ENCODE measurements at regions of chr11 and their contacts with region 1.

Region 1: DNA sequence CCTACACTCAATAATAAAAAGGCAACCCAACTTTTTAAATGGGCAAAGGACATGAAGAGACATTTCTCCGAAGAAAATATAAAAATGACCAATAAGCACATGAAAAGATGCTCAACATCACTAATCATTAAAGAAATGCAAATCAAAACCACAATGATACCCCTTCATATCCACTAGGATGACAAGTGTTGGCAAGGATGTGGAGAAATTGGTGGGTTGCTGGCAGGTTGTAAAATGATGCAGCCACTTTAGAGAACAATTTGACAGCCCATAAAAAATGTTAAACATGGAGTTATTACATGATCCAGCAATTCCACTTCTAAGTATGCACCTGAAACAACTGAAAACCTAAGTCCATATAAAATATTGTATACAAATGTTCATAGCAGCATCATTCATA is 73.2 kb upstream of the LMO2 start:
- DNase-seq: no peak
- ATAC-seq: no peak
- H3K4me3 ChIP-seq: no peak overlapping the region
- H3K27ac ChIP-seq: no peak overlapping the region
- H3K4me1 ChIP-seq: no peaks in the 10 kb centered on the region
- H3K27me3 ChIP-seq: no peaks in the 10 kb centered on the region
- CTCF ChIP-seq: no peak
- POLR2A ChIP-seq: no peak

Region 2: GRCh38 chr11:33819278-33819677 is 145.8 kb before region 1 on chr11:
- in situ Hi-C with region 1: no loop called
- intact Hi-C with region 1: no loop called
- DNase-seq: no peak
- ATAC-seq: no peak
- H3K4me3 ChIP-seq: no peak overlapping the region
- H3K27ac ChIP-seq: no peak overlapping the region
- H3K4me1 ChIP-seq: no peaks in the 10 kb centered on the region
- H3K27me3 ChIP-seq: peaks cover 0 to 13% (median 5%) of the 10 kb centered on the region in 3 donors
- CTCF ChIP-seq: no peak
- POLR2A ChIP-seq: no peak

Region 3: DNA sequence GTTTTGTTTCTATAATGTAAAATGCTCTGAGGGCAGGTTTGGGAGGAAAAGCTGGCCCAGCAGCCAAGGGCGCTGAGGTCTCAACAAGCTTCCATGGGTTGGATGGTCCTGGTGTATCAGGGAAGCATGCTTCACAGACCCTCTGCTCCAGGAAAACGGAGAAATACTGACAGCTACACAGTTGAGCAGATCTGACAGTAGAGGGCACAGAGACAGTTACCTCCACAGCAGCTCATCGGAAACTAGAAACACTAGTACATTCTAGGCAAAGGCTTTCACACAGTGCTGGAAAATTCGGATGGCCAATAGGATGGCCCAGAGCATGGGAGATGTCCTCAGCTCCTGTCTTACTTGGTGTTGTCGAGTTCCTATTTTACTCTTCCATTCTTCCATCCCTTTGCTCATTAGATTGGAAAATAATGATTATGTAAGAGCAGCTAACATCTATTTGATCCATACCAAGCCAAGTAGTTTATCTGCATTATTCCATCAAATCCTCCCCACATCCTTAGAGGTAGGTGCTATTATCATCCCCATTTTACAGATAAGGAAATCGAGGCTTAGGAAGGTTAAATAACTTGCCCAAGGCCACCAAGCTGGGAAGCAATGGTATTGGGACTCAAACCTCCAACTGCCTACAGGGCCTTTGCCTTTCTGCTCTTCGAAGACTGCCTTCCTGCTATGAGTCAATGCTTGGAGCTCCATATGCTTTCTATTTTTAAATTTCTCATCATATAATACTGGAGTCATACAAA is 101.4 kb before region 1 on chr11:
- in situ Hi-C with region 1: loop called (anchors 5 kb)
- intact Hi-C with region 1: no loop called
- DNase-seq: no peak
- ATAC-seq: no peak
- H3K4me3 ChIP-seq: no peak overlapping the region
- H3K27ac ChIP-seq: no peak overlapping the region
- H3K4me1 ChIP-seq: peaks cover 2 to 4% of the 10 kb centered on the region in 2 donors
- H3K27me3 ChIP-seq: no peaks in the 10 kb centered on the region
- CTCF ChIP-seq: no peak
- POLR2A ChIP-seq: no peak